Dorsolateral prefrontal cortex (tissue), 120 donors: ENCODE measurements at regions of chr5 and their contacts with region 1.

Region 1: GRCh38 chr5:1344975-1345838 is at the start of gene CLPTM1L:
- DNase-seq: peak; percentile 57 to 92 (median 70)
- H3K4me3 ChIP-seq: peak within 1 kb of the TSS; percentile 62 to 100 (median 96)
- H3K27ac ChIP-seq: peak within 1 kb of the TSS in 57 of 59 donors; percentile 24 to 94 (median 85)
- H3K27me3 ChIP-seq: no peaks in the 10 kb centered on the region
- CTCF ChIP-seq: peak in 23 of 56 donors; percentile 7 to 60 (median 22)
- total RNA-seq, gene CLPTM1L: 43.0 to 76.3 (median 58.2) TPM

Region 2: DNA sequence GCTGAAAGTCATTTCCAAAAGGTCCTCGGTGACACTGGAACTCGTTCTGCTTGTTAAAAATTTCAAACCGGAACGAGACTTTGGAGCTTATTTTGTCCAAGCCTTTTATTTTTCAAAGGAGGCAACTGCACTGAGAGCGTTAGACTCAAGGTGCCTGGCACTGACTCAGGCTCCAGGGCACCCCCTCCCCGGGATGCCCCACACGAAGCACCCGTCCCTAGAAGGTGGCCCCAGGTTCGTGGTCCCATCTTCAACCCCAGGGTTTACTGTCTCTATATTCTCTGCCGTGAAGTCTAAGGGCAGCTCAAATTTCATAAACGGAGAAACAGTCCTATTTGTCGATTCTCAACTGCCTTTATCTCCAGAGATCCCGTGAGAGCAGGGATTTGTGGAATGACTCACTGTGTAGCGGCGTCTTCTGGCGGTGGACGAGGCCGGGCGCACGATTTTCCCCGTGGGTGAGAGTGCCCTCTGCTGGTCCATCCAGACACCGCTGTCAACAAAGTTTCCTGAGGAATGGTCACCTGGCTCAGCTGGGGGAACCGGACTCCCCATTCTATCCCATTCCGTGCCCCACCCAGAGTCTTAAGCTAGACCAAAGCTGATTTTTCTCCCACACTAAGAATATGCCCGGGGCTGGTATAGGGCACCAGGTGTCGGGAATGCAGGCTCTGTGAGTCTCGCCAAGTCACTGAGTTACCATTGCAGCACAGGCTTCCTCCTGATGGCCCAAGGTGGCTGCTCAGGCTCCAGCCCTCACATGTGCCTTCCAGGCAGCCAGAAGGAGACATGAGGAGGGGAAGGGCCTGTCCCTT is 170.9 kb before region 1 on chr5:
- intact Hi-C with region 1: loop called (anchors 5 kb)
- DNase-seq: peak in 9 of 10 donors; percentile 47 to 71 (median 53)
- H3K4me3 ChIP-seq: no peak overlapping the region
- H3K27ac ChIP-seq: no peak overlapping the region
- H3K27me3 ChIP-seq: peaks cover 0 to 6% (median 0%) of the 10 kb centered on the region in 45 donors
- CTCF ChIP-seq: peak; percentile 56 to 84 (median 73)

Region 3: GRCh38 chr5:1227669-1228068 is 117.5 kb before region 1 on chr5:
- intact Hi-C with region 1: no loop called
- DNase-seq: no peak
- H3K4me3 ChIP-seq: no peak overlapping the region
- H3K27ac ChIP-seq: no peak overlapping the region
- H3K27me3 ChIP-seq: peaks cover 0 to 15% (median 0%) of the 10 kb centered on the region in 45 donors
- CTCF ChIP-seq: no peak

Region 4: DNA sequence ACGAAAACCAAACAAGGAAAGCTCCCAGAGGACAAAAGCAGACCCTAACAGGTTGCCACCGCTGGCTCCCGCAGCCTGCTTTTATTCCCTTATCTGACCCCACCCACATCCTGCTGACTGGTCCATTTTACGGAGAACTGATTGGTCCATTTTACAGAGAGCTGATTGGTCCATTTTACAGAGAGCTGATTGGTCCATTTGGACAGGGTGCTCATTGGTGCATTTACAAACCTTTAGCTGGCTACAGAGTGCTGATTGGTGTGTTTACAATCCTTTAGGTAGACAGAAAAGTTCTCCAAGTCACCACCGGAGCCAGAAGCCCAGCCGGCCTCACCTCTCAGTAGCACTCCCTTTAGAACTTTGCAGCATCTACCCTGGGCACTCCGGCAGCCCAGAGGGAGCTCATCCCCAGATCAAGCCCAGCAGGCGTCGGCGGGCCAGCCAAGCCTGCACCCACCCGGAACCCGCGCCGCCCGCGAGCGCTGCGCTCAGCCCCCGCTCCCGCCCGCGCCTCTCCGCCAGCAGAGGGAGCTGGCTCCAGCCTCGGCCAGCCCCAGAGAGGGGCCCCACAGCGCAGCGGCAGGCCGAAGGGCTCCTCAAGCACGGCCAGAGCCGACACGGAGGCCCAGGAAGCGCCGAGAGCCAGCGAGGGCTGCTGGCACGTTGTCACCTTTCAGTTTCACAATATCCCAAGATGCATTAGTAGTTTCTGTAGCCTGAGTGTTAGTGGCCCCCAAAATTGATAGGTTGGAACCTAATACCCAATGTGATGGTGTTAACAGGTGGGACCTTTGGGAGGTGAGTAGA is 35.0 kb after region 1 on chr5:
- intact Hi-C with region 1: loop called in 1 of 2 experiments (anchors 5 kb)
- DNase-seq: peak in 2 of 10 donors; percentile 27 to 71
- H3K4me3 ChIP-seq: peak overlapping the region in 55 of 59 donors; percentile 9 to 59 (median 37)
- H3K27ac ChIP-seq: no peak overlapping the region
- H3K27me3 ChIP-seq: peaks cover 0 to 30% (median 0%) of the 10 kb centered on the region in 45 donors
- CTCF ChIP-seq: peak in 54 of 56 donors; percentile 29 to 77 (median 61)

Region 5: GRCh38 chr5:1799602-1800471 is 454.6 kb after region 1 on chr5 and contains the start of gene MRPL36:
- intact Hi-C with region 1: loop called in 1 of 2 experiments (anchors 10 kb)
- DNase-seq: peak; percentile 81 to 90 (median 87)
- H3K4me3 ChIP-seq: peak within 1 kb of the TSS; percentile 70 to 100 (median 97)
- H3K27ac ChIP-seq: peak within 1 kb of the TSS; percentile 51 to 96 (median 91)
- H3K27me3 ChIP-seq: no peaks in the 10 kb centered on the region
- CTCF ChIP-seq: peak in 17 of 56 donors; percentile 8 to 38 (median 22)
- total RNA-seq, gene MRPL36: 20.6 to 47.0 (median 33.2) TPM